T-cell (primary cell): ENCODE measurements at regions of chr19 and their contacts with region 1.

Region 1: DNA sequence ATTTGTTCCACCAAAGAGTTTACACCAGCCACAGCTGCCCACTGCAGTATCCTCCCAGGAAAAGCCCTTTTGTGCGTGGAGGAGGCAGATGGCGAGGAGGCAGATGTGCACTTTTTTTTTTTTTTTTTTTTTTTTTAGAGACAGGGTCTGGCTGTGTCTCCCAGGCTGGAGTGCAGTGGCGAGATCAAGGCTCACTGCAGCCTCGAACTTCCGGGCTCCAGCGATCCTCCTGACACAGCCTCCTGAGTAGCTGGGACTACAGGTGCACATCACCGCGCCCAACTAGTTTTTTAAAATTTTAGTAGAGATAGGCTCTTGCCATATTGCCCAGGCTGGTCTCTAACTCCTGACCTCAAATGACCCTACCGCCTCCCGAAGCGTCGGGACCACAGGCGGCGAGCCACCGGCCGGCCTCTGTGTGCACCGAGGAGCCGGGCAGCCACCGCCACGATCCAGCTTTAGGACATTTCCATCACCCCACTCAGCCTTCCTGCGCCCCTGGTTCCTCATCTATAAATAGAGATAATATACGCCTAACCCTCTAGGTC is 563 bp upstream of the PDCD5 start:
- DNase-seq: no peak
- ATAC-seq: peak in 1 of 4 experiments; percentile 14
- H3K4me3 ChIP-seq: peak overlapping the region; percentile 67 to 72
- H3K4me3 Mint-ChIP-seq: peak overlapping the region; percentile 84 to 95 (median 93)
- H3K27ac ChIP-seq: peak overlapping the region; percentile 47
- H3K27ac Mint-ChIP-seq: peak overlapping the region; percentile 88 to 96
- H3K4me1 ChIP-seq: peaks cover 11 to 19% of the 10 kb centered on the region in 2 experiments
- H3K4me1 Mint-ChIP-seq: peaks cover 19 to 35% (median 31%) of the 10 kb centered on the region in 3 donors
- H3K27me3 ChIP-seq: no peaks in the 10 kb centered on the region
- H3K27me3 Mint-ChIP-seq: peaks cover 0 to 1% of the 10 kb centered on the region in 2 donors

Region 2: DNA sequence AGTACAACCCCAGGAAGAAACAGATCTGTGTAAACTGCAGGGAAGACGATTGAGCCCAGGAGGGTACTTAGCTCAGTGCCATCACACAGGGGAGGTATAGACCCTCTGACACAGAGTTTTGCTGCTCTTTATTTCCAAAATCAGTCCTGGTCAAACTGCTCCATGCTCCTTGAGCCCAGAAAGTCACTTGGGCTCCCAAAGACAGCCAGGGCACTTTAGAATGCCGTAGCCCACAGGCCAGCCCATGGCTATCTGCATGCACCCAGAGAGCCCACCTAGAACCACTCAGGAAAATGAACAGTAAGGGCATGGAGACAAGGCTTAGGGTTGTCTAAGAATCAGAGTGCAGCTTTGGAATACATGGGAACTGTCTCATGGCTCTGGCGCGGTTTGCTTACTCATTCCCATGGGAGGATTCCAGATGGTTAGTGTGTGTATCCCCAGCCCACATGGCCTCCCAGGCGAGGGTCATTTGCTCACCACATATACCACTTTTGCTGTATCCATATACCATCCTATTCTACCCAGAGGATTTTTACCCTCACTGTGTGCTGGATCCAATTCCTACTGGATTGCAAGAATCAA is 14.1 kb before region 1 on chr19:
- CTCF ChIA-PET with region 1: no interaction called
- POLR2A ChIA-PET with region 1: no interaction called
- DNase-seq: no peak
- ATAC-seq: no peak
- H3K4me3 ChIP-seq: no peak overlapping the region
- H3K4me3 Mint-ChIP-seq: no peak overlapping the region
- H3K27ac ChIP-seq: no peak overlapping the region
- H3K27ac Mint-ChIP-seq: no peak overlapping the region
- H3K4me1 ChIP-seq: peaks cover 0 to 7% of the 10 kb centered on the region in 2 experiments
- H3K4me1 Mint-ChIP-seq: peaks cover 3 to 8% (median 6%) of the 10 kb centered on the region in 3 donors
- H3K27me3 ChIP-seq: peaks cover 0 to 29% of the 10 kb centered on the region in 2 experiments
- H3K27me3 Mint-ChIP-seq: peaks cover 6 to 14% of the 10 kb centered on the region in 2 donors

Region 3: DNA sequence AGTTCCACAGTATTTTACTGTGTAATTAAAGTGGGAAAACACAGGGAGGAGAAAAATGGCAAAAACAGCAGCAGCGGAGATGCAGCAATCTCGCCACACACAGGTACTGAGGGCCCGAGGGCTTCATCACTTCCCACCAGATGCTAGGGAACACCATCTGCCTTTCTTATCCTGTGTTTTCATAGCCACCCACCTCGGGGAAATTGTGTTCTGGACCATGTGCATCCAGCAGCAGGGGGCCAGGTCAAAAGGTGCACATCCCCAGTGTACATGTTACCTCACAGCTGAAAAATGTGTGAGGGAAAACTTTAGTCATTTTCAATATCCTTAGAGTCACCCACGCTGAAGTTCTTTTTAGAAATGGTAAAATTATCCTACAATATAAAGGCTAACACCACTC is 30.7 kb after region 1 on chr19:
- CTCF ChIA-PET with region 1: no interaction called
- POLR2A ChIA-PET with region 1: no interaction called
- DNase-seq: no peak
- ATAC-seq: no peak
- H3K4me3 ChIP-seq: no peak overlapping the region
- H3K4me3 Mint-ChIP-seq: no peak overlapping the region
- H3K27ac ChIP-seq: no peak overlapping the region
- H3K27ac Mint-ChIP-seq: no peak overlapping the region
- H3K4me1 ChIP-seq: no peaks in the 10 kb centered on the region
- H3K4me1 Mint-ChIP-seq: no peaks in the 10 kb centered on the region
- H3K27me3 ChIP-seq: no peaks in the 10 kb centered on the region
- H3K27me3 Mint-ChIP-seq: no peaks in the 10 kb centered on the region

Region 4: GRCh38 chr19:33176670-33177416 is 596.4 kb after region 1 on chr19:
- CTCF ChIA-PET with region 1: no interaction called
- POLR2A ChIA-PET with region 1: interaction called in 1 of 2 experiments, 11 read pairs
- DNase-seq: peak; percentile 84 to 100 (median 92)
- ATAC-seq: peak; percentile 75 to 78 (median 78)
- H3K4me3 ChIP-seq: peak overlapping the region; percentile 85 to 90
- H3K4me3 Mint-ChIP-seq: peak overlapping the region; percentile 90 to 97 (median 97)
- H3K27ac ChIP-seq: peak overlapping the region; percentile 88
- H3K27ac Mint-ChIP-seq: peak overlapping the region; percentile 96 to 98
- H3K4me1 ChIP-seq: peaks cover 7 to 45% of the 10 kb centered on the region in 2 experiments
- H3K4me1 Mint-ChIP-seq: peaks cover 41 to 50% (median 48%) of the 10 kb centered on the region in 3 donors
- H3K27me3 ChIP-seq: no peaks in the 10 kb centered on the region
- H3K27me3 Mint-ChIP-seq: peaks cover 0 to 2% of the 10 kb centered on the region in 2 donors